Heart left ventricle (tissue), 16 donors: ENCODE measurements at regions of chr12 and their contacts with region 1.

Region 1: DNA sequence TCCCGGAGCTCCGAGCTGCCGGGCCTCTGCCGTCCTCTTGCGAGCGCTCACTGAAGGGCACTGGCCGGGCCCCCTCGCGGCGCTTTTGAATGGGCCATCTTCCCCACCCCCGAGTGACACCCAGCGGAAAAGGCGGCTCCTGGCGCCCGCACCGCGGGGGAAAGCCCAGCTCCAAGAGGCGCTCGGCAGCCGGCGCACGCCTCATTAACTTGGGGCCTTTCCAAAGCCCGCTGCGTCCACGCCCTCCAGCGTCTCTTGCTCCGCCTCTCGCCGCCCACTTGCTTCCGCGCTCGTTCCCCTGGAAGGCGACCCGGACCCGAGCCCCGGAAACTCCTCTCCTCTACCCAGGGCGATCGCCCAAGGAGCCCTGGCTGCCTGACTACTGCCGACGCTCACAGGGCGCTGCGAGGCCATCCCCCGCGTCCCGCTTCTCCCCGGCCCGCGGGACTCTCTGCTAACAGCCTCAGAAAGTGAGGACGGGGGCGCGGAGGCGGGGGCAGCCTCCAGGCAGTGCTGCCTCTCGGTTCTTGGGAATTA is at the start of gene PHLDA1:
- DNase-seq: peak; percentile 96 to 97 (median 97)
- ATAC-seq: peak; percentile 91 to 95 (median 94)
- H3K4me3 ChIP-seq: peak within 1 kb of the TSS; percentile 65 to 90 (median 80)
- H3K27ac ChIP-seq: peak within 1 kb of the TSS; percentile 89 to 99 (median 96)
- H3K4me1 ChIP-seq: peaks cover 0 to 35% (median 17%) of the 10 kb centered on the region in 12 donors
- H3K27me3 ChIP-seq: no peaks in the 10 kb centered on the region
- CTCF ChIP-seq: peak; percentile 54 to 78 (median 64)
- POLR2A ChIP-seq: peak in 1 of 2 donors; percentile 91
- total RNA-seq, gene PHLDA1: 4.2 to 44.4 (median 8.3) TPM

Region 2: GRCh38 chr12:75511116-75512048 is 520.2 kb before region 1 on chr12 and contains the start of gene KRR1:
- intact Hi-C with region 1: loop called in 2 of 10 experiments (anchors 5 kb)
- DNase-seq: peak; percentile 90 to 95 (median 93)
- ATAC-seq: peak; percentile 99 to 100 (median 100)
- H3K4me3 ChIP-seq: peak within 1 kb of the TSS; percentile 64 to 95 (median 81)
- H3K27ac ChIP-seq: peak within 1 kb of the TSS; percentile 12 to 82 (median 74)
- H3K4me1 ChIP-seq: peaks cover 0 to 40% (median 14%) of the 10 kb centered on the region in 12 donors
- H3K27me3 ChIP-seq: no peaks in the 10 kb centered on the region
- CTCF ChIP-seq: peak in 2 of 12 donors; percentile 5 to 6
- POLR2A ChIP-seq: peak in 1 of 2 donors; percentile 43
- total RNA-seq, gene KRR1: 16.4 to 42.6 (median 31.1) TPM

Region 3: DNA sequence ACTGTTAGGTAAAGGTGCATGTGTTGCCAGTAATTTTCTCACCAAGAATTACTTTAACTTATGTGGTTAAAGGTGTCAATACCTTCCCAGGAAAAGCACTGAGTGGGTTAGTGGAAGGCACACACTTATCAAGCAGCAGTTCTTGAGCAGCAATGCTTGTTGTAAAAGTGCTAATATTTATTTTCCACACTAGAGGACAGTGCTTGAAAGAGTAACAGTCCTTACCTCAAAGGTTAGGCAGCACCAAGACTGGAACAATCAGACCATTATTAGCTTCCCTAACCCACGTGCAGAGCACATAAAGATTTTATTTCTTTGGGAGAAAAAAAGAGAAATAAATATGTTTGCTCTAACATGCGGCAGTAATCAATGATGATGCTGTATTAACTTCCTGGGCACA is 471.4 kb before region 1 on chr12:
- intact Hi-C with region 1: loop called in 8 of 10 experiments (anchors 2 to 10 kb)
- DNase-seq: no peak
- ATAC-seq: peak in 3 of 4 donors; percentile 68 to 83 (median 80)
- H3K4me3 ChIP-seq: no peak overlapping the region
- H3K27ac ChIP-seq: no peak overlapping the region
- H3K4me1 ChIP-seq: peaks cover 0 to 11% (median 0%) of the 10 kb centered on the region in 12 donors
- H3K27me3 ChIP-seq: no peaks in the 10 kb centered on the region
- CTCF ChIP-seq: peak in 11 of 12 donors; percentile 10 to 68 (median 48)
- POLR2A ChIP-seq: no peak

Region 4: GRCh38 chr12:75722714-75723200 is 308.8 kb before region 1 on chr12:
- intact Hi-C with region 1: loop called in 7 of 10 experiments (anchors 1 to 10 kb)
- DNase-seq: peak in 4 of 5 donors; percentile 44 to 72 (median 54)
- ATAC-seq: peak; percentile 33 to 88 (median 82)
- H3K4me3 ChIP-seq: no peak overlapping the region
- H3K27ac ChIP-seq: peak overlapping the region; percentile 39 to 80 (median 75)
- H3K4me1 ChIP-seq: peaks cover 9 to 57% (median 42%) of the 10 kb centered on the region in 12 donors
- H3K27me3 ChIP-seq: no peaks in the 10 kb centered on the region
- CTCF ChIP-seq: no peak
- POLR2A ChIP-seq: no peak

Region 5: GRCh38 chr12:75759842-75760572 is 271.6 kb before region 1 on chr12:
- intact Hi-C with region 1: no loop called
- DNase-seq: no peak
- ATAC-seq: no peak
- H3K4me3 ChIP-seq: no peak overlapping the region
- H3K27ac ChIP-seq: no peak overlapping the region
- H3K4me1 ChIP-seq: no peaks in the 10 kb centered on the region
- H3K27me3 ChIP-seq: no peaks in the 10 kb centered on the region
- CTCF ChIP-seq: no peak
- POLR2A ChIP-seq: no peak

Region 6: GRCh38 chr12:75837700-75838099 is 193.9 kb before region 1 on chr12:
- intact Hi-C with region 1: loop called in 1 of 10 experiments (anchors 5 kb)
- DNase-seq: peak in 3 of 5 donors; percentile 20 to 68 (median 30)
- ATAC-seq: peak in 3 of 4 donors; percentile 33 to 52 (median 38)
- H3K4me3 ChIP-seq: no peak overlapping the region
- H3K27ac ChIP-seq: peak overlapping the region in 1 of 12 donors; percentile 18
- H3K4me1 ChIP-seq: peaks cover 0 to 13% (median 3%) of the 10 kb centered on the region in 12 donors
- H3K27me3 ChIP-seq: no peaks in the 10 kb centered on the region
- CTCF ChIP-seq: no peak
- POLR2A ChIP-seq: no peak

Region 7: DNA sequence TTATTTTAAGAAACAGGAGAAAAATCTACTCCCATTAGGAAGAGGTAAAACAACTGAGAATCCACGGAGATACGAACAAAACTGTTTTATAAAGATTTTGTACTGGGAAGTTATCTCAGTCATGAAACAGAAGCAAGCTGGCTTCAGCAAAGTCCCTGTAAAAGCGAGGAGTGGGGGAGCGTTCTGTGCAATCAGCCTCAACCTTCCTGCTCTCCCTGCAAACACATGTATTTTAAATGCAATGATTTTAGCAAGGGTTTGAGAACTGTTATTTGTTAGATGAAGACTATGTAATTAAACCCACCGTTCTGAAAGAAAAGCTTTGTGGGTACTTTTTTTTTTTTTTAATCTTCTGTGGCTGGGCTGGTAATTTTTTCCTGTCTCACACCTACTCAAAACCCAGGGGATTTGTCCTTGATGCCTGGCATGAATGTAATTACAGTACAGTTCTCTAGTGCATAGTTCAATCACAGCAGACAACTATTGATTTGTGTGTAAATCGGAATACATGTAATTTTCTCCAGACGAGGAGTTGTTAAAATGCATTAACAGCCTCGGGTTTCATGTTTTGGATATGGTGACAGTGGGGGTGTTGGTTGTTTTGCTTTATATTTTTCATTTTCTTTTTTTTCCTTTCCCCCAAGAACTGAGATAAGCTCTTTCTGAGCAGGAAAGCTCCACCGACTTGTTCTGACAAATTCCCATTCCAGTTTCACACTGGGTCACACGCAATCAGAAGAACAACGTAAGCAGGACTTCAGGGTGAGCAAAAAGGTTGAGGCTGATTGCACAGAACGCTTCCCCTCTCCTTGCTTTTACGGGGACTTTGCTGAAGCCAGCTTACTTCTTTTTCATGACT is 153.6 kb before region 1 on chr12:
- intact Hi-C with region 1: no loop called
- DNase-seq: no peak
- ATAC-seq: peak in 1 of 4 donors; percentile 30
- H3K4me3 ChIP-seq: peak overlapping the region in 1 of 12 donors; percentile 7
- H3K27ac ChIP-seq: no peak overlapping the region
- H3K4me1 ChIP-seq: peaks cover 0 to 8% (median 0%) of the 10 kb centered on the region in 12 donors
- H3K27me3 ChIP-seq: no peaks in the 10 kb centered on the region
- CTCF ChIP-seq: no peak
- POLR2A ChIP-seq: no peak

Region 8: DNA sequence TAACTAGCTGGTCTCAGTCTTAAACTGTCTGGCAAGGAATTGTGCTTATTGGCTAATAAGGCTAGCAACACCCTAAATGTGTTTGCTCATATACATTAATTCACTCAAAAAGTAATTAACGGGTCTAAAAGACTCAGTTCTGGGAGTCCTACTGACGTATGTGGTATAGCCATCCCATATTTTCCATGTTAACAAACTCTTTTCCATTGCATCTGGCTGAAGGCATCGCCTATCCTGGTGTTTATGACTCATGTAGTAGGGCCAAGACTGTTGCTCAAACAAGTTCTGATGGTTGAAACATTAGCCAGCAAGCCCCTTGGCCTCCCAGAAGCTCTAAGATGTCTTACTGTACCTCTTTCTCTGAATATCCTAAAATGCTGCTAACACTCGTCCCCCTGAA is 98.5 kb before region 1 on chr12:
- intact Hi-C with region 1: loop called in 7 of 10 experiments (anchors 5 to 10 kb)
- DNase-seq: no peak
- ATAC-seq: peak in 1 of 4 donors; percentile 66
- H3K4me3 ChIP-seq: no peak overlapping the region
- H3K27ac ChIP-seq: peak overlapping the region in 1 of 12 donors; percentile 53
- H3K4me1 ChIP-seq: peaks cover 4 to 30% (median 15%) of the 10 kb centered on the region in 12 donors
- H3K27me3 ChIP-seq: peaks cover 0 to 26% (median 0%) of the 10 kb centered on the region in 9 donors
- CTCF ChIP-seq: no peak
- POLR2A ChIP-seq: no peak

Region 9: GRCh38 chr12:76064904-76065303 is 33.3 kb after region 1 on chr12:
- intact Hi-C with region 1: no loop called
- DNase-seq: no peak
- ATAC-seq: no peak
- H3K4me3 ChIP-seq: no peak overlapping the region
- H3K27ac ChIP-seq: no peak overlapping the region
- H3K4me1 ChIP-seq: peaks cover 0 to 14% (median 2%) of the 10 kb centered on the region in 12 donors
- H3K27me3 ChIP-seq: no peaks in the 10 kb centered on the region
- CTCF ChIP-seq: no peak
- POLR2A ChIP-seq: no peak

Region 10: GRCh38 chr12:76348079-76348901 is 316.7 kb after region 1 on chr12 and contains the start of gene BBS10:
- intact Hi-C with region 1: loop called in 3 of 10 experiments (anchors 5 to 10 kb)
- DNase-seq: peak; percentile 93 to 95 (median 94)
- ATAC-seq: peak; percentile 95 to 99 (median 98)
- H3K4me3 ChIP-seq: peak within 1 kb of the TSS; percentile 57 to 94 (median 78)
- H3K27ac ChIP-seq: peak within 1 kb of the TSS; percentile 82 to 90 (median 84)
- H3K4me1 ChIP-seq: peaks cover 0 to 42% (median 25%) of the 10 kb centered on the region in 12 donors
- H3K27me3 ChIP-seq: no peaks in the 10 kb centered on the region
- CTCF ChIP-seq: peak in 10 of 12 donors; percentile 14 to 67 (median 42)
- POLR2A ChIP-seq: peak in 1 of 2 donors; percentile 49
- total RNA-seq, gene BBS10: 5.7 to 13.4 (median 9.5) TPM